ENCODE measurements at regions of chr17 and their contacts with region 1.

Region 1: GRCh38 chr17:1724506-1725362 is at the start of gene WDR81:
- DNase-seq: peak; percentile 46
- H3K4me3 ChIP-seq: peak within 1 kb of the TSS; percentile 39 to 60 (median 56)
- H3K27ac ChIP-seq: peak within 1 kb of the TSS; percentile 26
- H3K4me1 ChIP-seq: peaks cover 41% of the 10 kb centered on the region
- H3K27me3 ChIP-seq: no peaks in the 10 kb centered on the region
- CTCF ChIP-seq: no peak
- total RNA-seq, gene WDR81: 17.8 to 35.5 TPM

Region 2: GRCh38 chr17:1829592-1830257 is 105.0 kb after region 1 on chr17 and contains the starts of genes RPA1 and SMYD4:
- CTCF ChIA-PET with region 1: no interaction called
- dilution Hi-C with region 1: no loop called
- in situ Hi-C with region 1: no loop called
- intact Hi-C with region 1: loop called (anchors 1 kb)
- DNase-seq: peak; percentile 87
- H3K4me3 ChIP-seq: peak within 1 kb of the TSS; percentile 78 to 97 (median 85)
- H3K27ac ChIP-seq: peak within 1 kb of the TSS; percentile 46
- H3K4me1 ChIP-seq: peaks cover 5% of the 10 kb centered on the region
- H3K27me3 ChIP-seq: no peaks in the 10 kb centered on the region
- CTCF ChIP-seq: no peak
- total RNA-seq, gene RPA1: 17.2 to 78.5 TPM
- total RNA-seq, gene SMYD4: 12.7 to 15.0 TPM